Posterior vena cava (tissue), 2 donors: ENCODE measurements at regions of chr14 and their contacts with region 1.

Region 1: DNA sequence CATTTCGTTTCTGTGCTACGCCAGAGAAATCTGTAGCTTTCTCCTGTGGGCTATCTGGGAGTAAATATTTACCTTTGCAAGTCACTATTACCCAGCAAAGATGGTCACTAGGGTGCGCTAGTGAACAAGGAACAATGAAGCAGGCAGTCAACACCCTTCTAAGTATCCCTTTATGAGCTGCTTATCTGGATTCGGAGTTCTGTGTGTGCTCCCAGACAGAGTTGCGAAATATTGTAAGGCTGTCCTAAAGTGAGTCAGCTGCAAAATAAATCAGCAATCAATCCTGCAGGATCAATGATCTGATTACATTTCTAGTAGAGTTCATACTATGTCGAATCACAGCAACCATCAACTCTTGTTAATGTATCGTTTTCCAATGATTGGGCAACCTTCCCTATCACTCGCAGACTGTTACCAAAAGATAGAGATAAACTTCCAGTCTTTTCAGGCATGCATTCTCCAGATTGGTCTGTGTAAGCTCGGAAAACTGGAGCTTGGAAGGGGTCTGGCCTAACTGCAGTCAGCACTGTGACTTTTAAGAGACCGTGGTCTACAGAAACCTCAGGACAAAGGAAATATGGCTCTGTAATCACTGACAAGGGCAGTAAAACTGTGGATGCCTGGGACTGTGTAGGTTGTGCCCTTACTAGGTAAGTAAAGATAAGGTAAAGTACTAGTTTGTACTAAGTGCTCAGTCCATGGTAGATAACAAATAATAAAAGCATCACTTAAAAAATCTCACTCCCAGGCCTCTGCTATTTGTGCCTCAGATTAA is 133.5 kb downstream of the KCNK10 start:
- DNase-seq: no peak

Region 2: GRCh38 chr14:88233915-88234314 is 44.3 kb after region 1 on chr14:
- intact Hi-C with region 1: no loop called
- DNase-seq: no peak

Region 3: GRCh38 chr14:88562831-88563686 is 373.5 kb after region 1 on chr14 and contains the start of gene ZC3H14:
- intact Hi-C with region 1: loop called in 1 of 2 experiments (anchors 5 kb)
- DNase-seq: peak; percentile 94
- total RNA-seq, gene ZC3H14: 42.6 to 42.7 TPM